ENCODE measurements at regions of chr7 and their contacts with region 1.

Region 1: DNA sequence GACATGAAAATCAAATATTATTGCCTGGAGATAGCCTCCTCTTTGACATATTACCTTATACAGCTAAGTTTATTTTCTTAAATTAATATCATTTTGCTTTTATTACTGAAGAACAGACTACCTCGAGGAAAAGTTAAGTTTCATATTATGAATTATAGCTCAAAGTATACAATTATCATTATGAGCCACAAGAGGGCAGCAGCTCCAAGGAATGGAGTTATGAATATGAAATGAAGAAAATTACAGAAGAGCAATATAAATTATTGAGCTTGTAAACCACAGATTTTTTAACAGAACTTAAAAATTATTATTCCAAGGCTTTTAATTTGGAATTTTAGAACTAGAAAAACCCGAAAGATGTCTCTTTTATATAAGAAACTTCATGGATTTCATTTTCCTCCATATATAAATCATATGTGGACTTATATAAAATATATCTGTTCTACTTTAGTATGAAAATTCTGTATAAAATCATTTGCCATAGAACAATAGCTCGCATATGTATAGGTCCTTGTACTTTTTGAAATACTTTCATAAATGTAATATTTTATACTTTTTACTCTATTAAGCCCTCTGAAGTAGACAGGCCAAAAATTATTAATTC is 40.1 kb downstream of the IQUB start:
- DNase-seq: no peak
- ATAC-seq: no peak

Region 2: GRCh38 chr7:123534383-123535260 is 40.3 kb after region 1 on chr7 and contains the start of gene IQUB:
- intact Hi-C with region 1: loop called (anchors 5 kb)
- DNase-seq: peak; percentile 98
- ATAC-seq: peak; percentile 96
- total RNA-seq, gene IQUB: 0.32 TPM

Region 3: DNA sequence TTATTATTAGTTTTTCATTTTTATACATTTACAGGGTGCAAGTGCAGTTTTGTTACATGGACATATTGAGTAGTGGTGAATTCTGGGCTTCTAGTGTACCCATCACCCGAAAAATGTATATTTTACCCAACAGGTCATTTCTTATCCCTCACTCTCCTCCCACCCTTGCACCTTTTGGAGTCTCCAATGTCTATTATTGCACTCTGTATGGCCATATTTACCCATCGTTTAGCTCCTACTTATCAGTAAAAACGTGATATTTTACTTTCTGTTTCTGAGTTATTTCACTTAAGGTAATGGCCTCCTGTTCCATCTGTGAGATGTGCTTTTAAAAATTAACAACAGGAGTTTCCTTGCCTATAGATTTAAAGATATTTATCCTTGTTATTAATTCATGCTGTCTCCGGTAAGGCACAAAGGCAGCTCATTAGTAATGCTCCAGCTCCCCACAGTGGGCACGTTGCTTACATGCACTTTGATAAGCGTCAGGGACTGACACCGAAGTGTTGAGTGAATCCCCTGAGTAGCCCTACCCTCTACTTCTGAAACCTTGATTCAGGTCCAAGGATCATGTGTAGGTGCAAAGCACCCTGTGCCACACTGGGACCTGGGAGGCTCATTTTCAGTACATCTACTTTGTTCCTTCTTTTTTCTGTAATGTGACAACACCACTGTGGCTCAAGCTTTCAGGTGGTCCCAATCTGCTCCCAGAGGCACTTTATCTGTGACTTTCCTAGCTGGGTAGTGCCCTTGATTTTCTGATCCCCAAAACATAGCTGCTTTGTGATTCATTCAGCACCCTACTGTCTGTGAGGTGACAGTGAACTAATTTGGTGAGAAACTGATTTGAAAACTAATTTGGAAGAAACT is 377.9 kb after region 1 on chr7:
- intact Hi-C with region 1: loop called (anchors 5 kb)
- DNase-seq: peak; percentile 31
- ATAC-seq: peak; percentile 88